HCT116 (cell line): ENCODE measurements at regions of chr19 and their contacts with region 1.

Region 1: DNA sequence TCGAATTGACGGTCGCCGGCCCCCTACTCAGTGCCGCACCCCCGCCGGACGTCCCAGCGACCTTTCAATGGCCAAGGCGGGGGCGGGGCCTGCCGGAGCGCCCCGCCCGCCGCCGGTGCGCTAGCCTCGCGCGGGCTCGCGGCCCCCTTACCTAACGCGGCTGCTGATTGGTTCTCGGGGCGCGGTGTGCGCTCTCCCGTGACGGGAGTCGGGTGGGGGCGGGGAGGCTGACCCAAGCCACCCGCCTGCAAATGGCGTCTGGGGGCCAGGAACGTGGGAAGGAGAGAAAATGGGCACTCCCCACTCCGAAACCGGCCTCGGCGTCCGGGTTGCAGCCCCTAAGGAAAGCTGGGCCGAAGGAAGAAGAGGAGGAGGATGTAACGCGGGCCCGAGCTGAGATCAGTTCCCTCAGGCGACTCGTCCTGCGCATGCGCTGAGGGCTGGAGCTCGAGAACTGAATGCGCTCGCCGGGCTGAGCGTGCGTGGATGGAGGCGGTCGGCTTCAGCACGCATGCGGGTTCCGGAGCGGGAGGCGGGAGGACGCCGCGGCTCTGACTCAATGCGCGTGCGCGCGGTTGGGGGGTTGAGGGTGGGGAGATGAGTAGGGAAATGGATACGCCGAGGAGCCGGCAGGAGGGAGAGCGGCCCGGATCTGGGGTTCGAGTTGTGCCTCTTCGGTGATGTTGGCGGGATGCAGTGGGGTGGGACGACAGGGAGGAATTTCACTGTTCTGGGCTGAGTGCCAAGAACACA is at the start of gene SMG9:
- DNase-seq: peak; percentile 95
- ATAC-seq: peak; percentile 76
- H3K4me3 ChIP-seq: peak within 1 kb of the TSS; percentile 79 to 86
- H3K27ac ChIP-seq: peak within 1 kb of the TSS; percentile 98
- H3K4me1 ChIP-seq: peaks cover 47 to 81% of the 10 kb centered on the region in 2 experiments
- H3K27me3 ChIP-seq: no peaks in the 10 kb centered on the region
- CTCF ChIP-seq: no peak
- POLR2A ChIP-seq: no peak
- RAD21 ChIP-seq: no peak
- total RNA-seq, gene SMG9: 80.2 TPM

Region 2: GRCh38 chr19:43743022-43743421 is 11.7 kb before region 1 on chr19:
- CTCF ChIA-PET with region 1: interaction called, 27 read pairs
- POLR2A ChIA-PET with region 1: interaction called, 10 read pairs
- RAD21 ChIA-PET with region 1: no interaction called
- intact Hi-C with region 1: no loop called
- DNase-seq: no peak
- ATAC-seq: no peak
- H3K4me3 ChIP-seq: no peak overlapping the region
- H3K27ac ChIP-seq: no peak overlapping the region
- H3K4me1 ChIP-seq: peaks cover 20 to 26% of the 10 kb centered on the region in 2 experiments
- H3K27me3 ChIP-seq: no peaks in the 10 kb centered on the region
- CTCF ChIP-seq: no peak
- POLR2A ChIP-seq: no peak
- RAD21 ChIP-seq: no peak

Region 3: DNA sequence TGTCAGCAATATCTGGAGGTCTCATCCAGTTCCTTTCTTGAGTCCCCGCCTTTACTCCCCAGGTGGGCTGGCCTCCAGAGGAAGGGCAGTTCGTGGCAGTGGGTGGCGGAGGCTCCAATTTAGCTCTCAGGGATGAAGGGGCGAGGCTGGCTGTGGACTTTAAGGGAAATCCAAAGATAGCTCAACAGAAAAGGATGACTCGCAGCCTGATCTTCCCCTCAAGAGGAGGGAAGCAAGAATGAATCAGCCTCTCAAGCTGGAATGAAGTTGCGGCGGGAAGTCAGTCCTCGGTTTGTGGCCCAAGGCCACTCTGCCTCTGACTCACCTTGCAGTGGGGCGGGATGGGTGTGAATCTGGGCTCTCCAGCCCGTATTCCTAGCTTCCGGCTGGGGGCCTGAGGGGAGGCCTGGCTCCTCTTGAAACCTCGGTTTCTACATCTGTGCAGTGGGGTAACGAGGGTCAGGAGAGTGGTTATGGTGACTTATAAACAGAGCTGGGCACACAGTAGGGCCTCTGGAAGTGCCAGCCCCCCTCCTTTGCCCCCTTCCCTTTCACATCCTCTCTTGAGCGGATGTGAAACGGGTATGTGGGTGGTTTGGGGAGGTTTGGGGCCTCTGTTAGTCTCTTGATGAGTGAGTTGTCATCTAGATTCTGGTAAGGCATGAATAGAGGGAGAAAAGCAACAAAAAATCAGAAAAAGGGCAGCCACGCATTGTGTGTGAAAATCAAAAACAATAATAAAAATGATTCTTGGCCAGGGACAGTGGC is 10.6 kb after region 1 on chr19:
- CTCF ChIA-PET with region 1: interaction called, 46 read pairs
- POLR2A ChIA-PET with region 1: interaction called, 60 read pairs
- RAD21 ChIA-PET with region 1: interaction called in 1 of 2 experiments, 3 read pairs
- intact Hi-C with region 1: loop called (anchors 1 kb)
- DNase-seq: peak; percentile 93
- ATAC-seq: peak; percentile 80
- H3K4me3 ChIP-seq: peak overlapping the region in 1 of 2 experiments; percentile 12; a peak in 2 of 4 replicates
- H3K27ac ChIP-seq: peak overlapping the region; percentile 98
- H3K4me1 ChIP-seq: peaks cover 67 to 84% of the 10 kb centered on the region in 2 experiments
- H3K27me3 ChIP-seq: no peaks in the 10 kb centered on the region
- CTCF ChIP-seq: no peak
- POLR2A ChIP-seq: no peak
- RAD21 ChIP-seq: peak; percentile 42

Region 4: DNA sequence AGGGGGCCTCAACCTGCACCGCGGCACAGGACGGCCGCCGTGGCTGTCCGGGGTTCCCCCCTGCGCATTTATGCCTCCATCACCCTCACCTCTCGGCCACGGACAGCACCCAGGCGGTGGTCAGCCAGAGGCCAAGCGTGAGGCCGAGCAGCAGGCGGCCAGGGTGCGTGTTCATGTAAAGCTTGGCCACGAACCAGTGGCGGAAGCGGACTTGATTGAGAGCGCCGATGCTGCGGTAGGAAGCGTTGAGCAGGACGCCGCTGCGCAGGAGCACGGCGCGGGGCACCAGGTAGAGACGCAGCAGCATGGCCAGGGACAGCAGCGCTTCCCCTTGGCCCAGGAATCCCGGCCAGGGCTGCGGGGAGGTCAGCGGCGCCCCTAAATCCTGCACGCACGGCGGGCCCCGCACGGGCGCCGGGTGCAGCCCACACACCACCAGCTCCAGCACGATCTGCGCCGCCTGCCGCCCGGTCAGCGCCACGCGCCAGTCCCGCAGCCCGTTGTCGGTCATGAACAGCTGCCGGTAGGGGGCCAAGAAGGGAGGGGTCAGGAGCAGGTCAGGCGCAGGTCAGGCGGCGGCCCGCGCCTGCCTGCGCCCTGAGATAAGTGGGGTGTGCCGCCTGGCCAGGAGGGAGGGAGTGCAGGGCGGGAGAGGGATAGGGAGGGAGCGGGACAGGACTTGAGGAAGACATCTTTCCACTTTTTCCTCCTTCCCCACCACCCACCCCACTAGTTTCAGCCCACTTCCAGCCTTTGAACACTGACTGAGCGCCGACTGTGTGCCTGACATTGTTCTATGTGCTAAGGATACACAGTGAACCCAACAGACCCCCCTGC is 19.6 kb after region 1 on chr19:
- CTCF ChIA-PET with region 1: interaction called, 4 read pairs
- POLR2A ChIA-PET with region 1: interaction called, 5 read pairs
- RAD21 ChIA-PET with region 1: interaction called in 1 of 2 experiments, 12 read pairs
- intact Hi-C with region 1: no loop called
- DNase-seq: no peak
- ATAC-seq: no peak
- H3K4me3 ChIP-seq: no peak overlapping the region
- H3K27ac ChIP-seq: no peak overlapping the region; the same call in 1 of the 2 replicates
- H3K4me1 ChIP-seq: peaks cover 29 to 34% of the 10 kb centered on the region in 2 experiments
- H3K27me3 ChIP-seq: no peaks in the 10 kb centered on the region
- CTCF ChIP-seq: no peak
- POLR2A ChIP-seq: no peak
- RAD21 ChIP-seq: no peak

Region 5: GRCh38 chr19:43784981-43785808 is 30.5 kb after region 1 on chr19:
- CTCF ChIA-PET with region 1: interaction called, 5 read pairs
- POLR2A ChIA-PET with region 1: interaction called, 5 read pairs
- RAD21 ChIA-PET with region 1: interaction called, 3 to 5 read pairs
- intact Hi-C with region 1: loop called (anchors 2 kb)
- DNase-seq: peak; percentile 79
- ATAC-seq: peak; percentile 51
- H3K4me3 ChIP-seq: peak overlapping the region; percentile 18 to 47
- H3K27ac ChIP-seq: peak overlapping the region; percentile 94
- H3K4me1 ChIP-seq: peaks cover 44 to 57% of the 10 kb centered on the region in 2 experiments
- H3K27me3 ChIP-seq: no peaks in the 10 kb centered on the region
- CTCF ChIP-seq: peak; percentile 92 to 99 (median 98); a peak in 5 of 6 replicates
- POLR2A ChIP-seq: no peak
- RAD21 ChIP-seq: peak; percentile 97

Region 6: DNA sequence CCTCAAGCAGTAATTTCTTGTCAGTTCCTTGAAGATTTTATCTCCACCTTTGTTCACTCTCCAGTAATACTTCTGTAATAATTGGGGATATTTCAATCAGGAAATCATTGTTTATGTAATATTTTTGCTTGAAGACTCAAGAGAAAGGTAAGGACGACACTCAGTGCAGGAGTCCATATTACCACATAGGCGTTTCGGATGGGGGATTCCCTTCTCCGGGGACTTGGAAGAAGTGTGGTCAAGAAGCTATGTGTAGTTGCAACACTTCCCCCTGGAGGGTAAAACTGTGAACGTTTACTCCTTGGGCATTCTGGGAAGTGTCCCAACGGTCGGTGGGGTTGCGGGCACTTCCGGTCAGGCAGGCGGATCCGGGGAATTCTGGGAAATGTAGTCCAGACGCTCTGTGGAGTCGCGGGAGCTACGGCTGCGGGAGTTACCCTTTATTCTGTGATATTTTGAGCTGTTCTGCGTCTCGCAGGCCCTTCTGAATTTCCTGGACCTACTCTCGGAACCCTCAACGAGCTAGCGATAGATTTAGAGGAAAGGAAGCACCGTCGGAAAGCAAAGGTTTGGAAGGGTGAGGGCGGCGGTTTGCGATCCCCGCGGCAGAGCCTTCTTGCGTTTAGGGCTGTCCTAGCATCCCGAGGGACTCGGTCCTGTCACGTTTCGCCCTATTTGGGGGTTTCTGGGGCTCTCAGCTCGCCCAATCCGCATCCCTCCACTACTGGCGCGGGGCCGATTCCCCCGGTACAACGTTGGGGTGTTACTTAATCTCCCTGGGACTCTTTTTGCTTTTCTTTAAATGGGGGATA is 196.4 kb after region 1 on chr19 and contains the start of gene ZNF221:
- CTCF ChIA-PET with region 1: no interaction called
- POLR2A ChIA-PET with region 1: no interaction called
- RAD21 ChIA-PET with region 1: no interaction called
- intact Hi-C with region 1: loop called (anchors 5 kb)
- DNase-seq: peak; percentile 95
- ATAC-seq: peak; percentile 96
- H3K4me3 ChIP-seq: peak within 1 kb of the TSS; percentile 73 to 80
- H3K27ac ChIP-seq: peak within 1 kb of the TSS; percentile 56
- H3K4me1 ChIP-seq: peaks cover 2 to 4% of the 10 kb centered on the region in 2 experiments; a peak in 3 of 4 replicates
- H3K27me3 ChIP-seq: no peaks in the 10 kb centered on the region
- CTCF ChIP-seq: peak in 2 of 3 experiments; percentile 49 to 58; a peak in 4 of 6 replicates
- POLR2A ChIP-seq: no peak
- RAD21 ChIP-seq: peak; percentile 57
- total RNA-seq, gene ZNF221: 2.5 TPM